ENCODE measurements at regions of chr15 and their contacts with region 1.

Region 1: GRCh38 chr15:36696196-36696595 is 116.8 kb downstream of the CDIN1 start:
- DNase-seq: no peak
- ATAC-seq: no peak
- H3K4me3 ChIP-seq: no peak overlapping the region
- H3K27ac ChIP-seq: no peak overlapping the region
- H3K4me1 ChIP-seq: no peaks in the 10 kb centered on the region
- H3K27me3 ChIP-seq: no peaks in the 10 kb centered on the region
- CTCF ChIP-seq: no peak
- POLR2A ChIP-seq: no peak

Region 2: GRCh38 chr15:36658312-36658711 is 37.9 kb before region 1 on chr15:
- intact Hi-C with region 1: loop called in 1 of 10 experiments (anchors 5 kb)
- DNase-seq: no peak
- ATAC-seq: peak in 1 of 4 donors; percentile 66
- H3K4me3 ChIP-seq: no peak overlapping the region
- H3K27ac ChIP-seq: no peak overlapping the region
- H3K4me1 ChIP-seq: peaks cover 0 to 11% (median 0%) of the 10 kb centered on the region in 12 donors
- H3K27me3 ChIP-seq: no peaks in the 10 kb centered on the region
- CTCF ChIP-seq: no peak
- POLR2A ChIP-seq: no peak